ENCODE measurements at regions of chr6 and their contacts with region 1.

Region 1: GRCh38 chr6:7604506-7604905 is 14.5 kb downstream of the SNRNP48 start:
- DNase-seq: no peak
- H3K4me3 ChIP-seq: no peak overlapping the region
- H3K27ac ChIP-seq: peak overlapping the region; percentile 53
- H3K4me1 ChIP-seq: peaks cover 22% of the 10 kb centered on the region
- H3K27me3 ChIP-seq: no peaks in the 10 kb centered on the region
- CTCF ChIP-seq: no peak

Region 2: GRCh38 chr6:7300926-7301325 is 303.6 kb before region 1 on chr6:
- intact Hi-C with region 1: loop called (anchors 10 kb)
- DNase-seq: no peak
- H3K4me3 ChIP-seq: no peak overlapping the region
- H3K27ac ChIP-seq: no peak overlapping the region
- H3K4me1 ChIP-seq: peaks cover 3% of the 10 kb centered on the region
- H3K27me3 ChIP-seq: no peaks in the 10 kb centered on the region
- CTCF ChIP-seq: no peak

Region 3: DNA sequence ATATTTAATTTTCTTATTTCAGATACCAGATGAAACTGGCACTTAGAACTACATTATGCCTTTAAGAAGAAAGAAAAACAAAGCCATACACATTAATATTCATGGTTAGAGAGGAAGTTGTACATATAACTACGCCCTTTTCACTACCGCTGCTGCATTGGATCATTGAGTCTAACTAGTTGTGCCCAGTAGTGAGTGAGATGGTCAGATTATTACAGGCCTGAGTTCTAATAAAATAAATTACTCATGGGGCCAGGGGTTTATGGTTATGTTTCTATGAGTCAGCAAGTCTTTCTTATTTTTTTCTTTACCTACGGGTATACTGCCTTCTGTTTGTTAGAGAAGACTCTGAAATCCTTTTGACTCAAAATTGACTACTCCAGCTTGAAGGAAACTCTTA is 203.4 kb before region 1 on chr6:
- intact Hi-C with region 1: loop called (anchors 10 kb)
- DNase-seq: no peak
- H3K4me3 ChIP-seq: no peak overlapping the region
- H3K27ac ChIP-seq: no peak overlapping the region
- H3K4me1 ChIP-seq: no peaks in the 10 kb centered on the region
- H3K27me3 ChIP-seq: no peaks in the 10 kb centered on the region
- CTCF ChIP-seq: no peak